ENCODE measurements at regions of chr1 and their contacts with region 1.

Region 1: GRCh38 chr1:155172732-155173477 is at the start of gene KRTCAP2:
- DNase-seq: peak; percentile 90 to 97 (median 92)
- ATAC-seq: peak; percentile 80
- H3K4me3 ChIP-seq: peak within 1 kb of the TSS; percentile 77
- H3K4me3 Mint-ChIP-seq: peak within 1 kb of the TSS; percentile 100
- H3K27ac ChIP-seq: peak within 1 kb of the TSS; percentile 89 to 91
- H3K27ac Mint-ChIP-seq: peak within 1 kb of the TSS; percentile 95
- H3K4me1 ChIP-seq: peaks cover 58% of the 10 kb centered on the region
- H3K4me1 Mint-ChIP-seq: peaks cover 55% of the 10 kb centered on the region
- H3K27me3 ChIP-seq: no peaks in the 10 kb centered on the region
- H3K27me3 Mint-ChIP-seq: no peaks in the 10 kb centered on the region
- CTCF ChIP-seq: peak; percentile 84
- total RNA-seq, gene KRTCAP2: 77.8 TPM

Region 2: GRCh38 chr1:155091071-155091709 is 81.7 kb before region 1 on chr1:
- CTCF ChIA-PET with region 1: interaction called, 29 read pairs
- POLR2A ChIA-PET with region 1: interaction called, 9 read pairs
- intact Hi-C with region 1: loop called (anchors 1 kb)
- DNase-seq: peak; percentile 67 to 88 (median 76)
- ATAC-seq: peak; percentile 91
- H3K4me3 ChIP-seq: no peak overlapping the region
- H3K4me3 Mint-ChIP-seq: no peak overlapping the region
- H3K27ac ChIP-seq: no peak overlapping the region
- H3K27ac Mint-ChIP-seq: no peak overlapping the region
- H3K4me1 ChIP-seq: peaks cover 15% of the 10 kb centered on the region
- H3K4me1 Mint-ChIP-seq: peaks cover 12% of the 10 kb centered on the region
- H3K27me3 ChIP-seq: no peaks in the 10 kb centered on the region
- H3K27me3 Mint-ChIP-seq: no peaks in the 10 kb centered on the region
- CTCF ChIP-seq: peak; percentile 91

Region 3: GRCh38 chr1:155193275-155193990 is 20.5 kb after region 1 on chr1:
- CTCF ChIA-PET with region 1: interaction called, 34 read pairs
- POLR2A ChIA-PET with region 1: interaction called, 31 read pairs
- intact Hi-C with region 1: loop called (anchors 1 to 2 kb)
- DNase-seq: peak; percentile 31 to 81 (median 62)
- ATAC-seq: peak; percentile 27
- H3K4me3 ChIP-seq: peak overlapping the region; percentile 62
- H3K4me3 Mint-ChIP-seq: peak overlapping the region; percentile 96
- H3K27ac ChIP-seq: peak overlapping the region; percentile 21 to 89
- H3K27ac Mint-ChIP-seq: peak overlapping the region; percentile 96
- H3K4me1 ChIP-seq: peaks cover 38% of the 10 kb centered on the region
- H3K4me1 Mint-ChIP-seq: peaks cover 27% of the 10 kb centered on the region
- H3K27me3 ChIP-seq: no peaks in the 10 kb centered on the region
- H3K27me3 Mint-ChIP-seq: no peaks in the 10 kb centered on the region
- CTCF ChIP-seq: peak; percentile 97

Region 4: GRCh38 chr1:155244368-155245162 is 71.7 kb after region 1 on chr1:
- CTCF ChIA-PET with region 1: interaction called, 7 read pairs
- POLR2A ChIA-PET with region 1: interaction called, 4 read pairs
- intact Hi-C with region 1: loop called in 1 of 2 experiments (anchors 5 kb)
- DNase-seq: peak; percentile 83 to 98 (median 91)
- ATAC-seq: peak; percentile 92
- H3K4me3 ChIP-seq: peak overlapping the region; percentile 68
- H3K4me3 Mint-ChIP-seq: peak overlapping the region; percentile 90
- H3K27ac ChIP-seq: peak overlapping the region; percentile 61 to 66
- H3K27ac Mint-ChIP-seq: peak overlapping the region; percentile 96
- H3K4me1 ChIP-seq: peaks cover 46% of the 10 kb centered on the region
- H3K4me1 Mint-ChIP-seq: peaks cover 47% of the 10 kb centered on the region
- H3K27me3 ChIP-seq: no peaks in the 10 kb centered on the region
- H3K27me3 Mint-ChIP-seq: peaks cover 5% of the 10 kb centered on the region
- CTCF ChIP-seq: peak; percentile 56

Region 5: GRCh38 chr1:155591770-155592169 is 418.9 kb after region 1 on chr1:
- CTCF ChIA-PET with region 1: no interaction called
- POLR2A ChIA-PET with region 1: no interaction called
- intact Hi-C with region 1: loop called in 1 of 2 experiments (anchors 2 kb)
- DNase-seq: peak in 6 of 14 experiments; percentile 7 to 78 (median 64)
- ATAC-seq: peak; percentile 72
- H3K4me3 ChIP-seq: no peak overlapping the region
- H3K4me3 Mint-ChIP-seq: no peak overlapping the region
- H3K27ac ChIP-seq: no peak overlapping the region
- H3K27ac Mint-ChIP-seq: no peak overlapping the region
- H3K4me1 ChIP-seq: no peaks in the 10 kb centered on the region
- H3K4me1 Mint-ChIP-seq: peaks cover 5% of the 10 kb centered on the region
- H3K27me3 ChIP-seq: no peaks in the 10 kb centered on the region
- H3K27me3 Mint-ChIP-seq: no peaks in the 10 kb centered on the region
- CTCF ChIP-seq: peak; percentile 63

Measured in CD4-positive, alpha-beta T cell (primary cell).